Activated CD4-positive, alpha-beta memory T cell treated with anti-CD3 and anti-CD28 coated beads for 36 hours (primary cell): ENCODE measurements at regions of chr1 and their contacts with region 1.

Region 1: DNA sequence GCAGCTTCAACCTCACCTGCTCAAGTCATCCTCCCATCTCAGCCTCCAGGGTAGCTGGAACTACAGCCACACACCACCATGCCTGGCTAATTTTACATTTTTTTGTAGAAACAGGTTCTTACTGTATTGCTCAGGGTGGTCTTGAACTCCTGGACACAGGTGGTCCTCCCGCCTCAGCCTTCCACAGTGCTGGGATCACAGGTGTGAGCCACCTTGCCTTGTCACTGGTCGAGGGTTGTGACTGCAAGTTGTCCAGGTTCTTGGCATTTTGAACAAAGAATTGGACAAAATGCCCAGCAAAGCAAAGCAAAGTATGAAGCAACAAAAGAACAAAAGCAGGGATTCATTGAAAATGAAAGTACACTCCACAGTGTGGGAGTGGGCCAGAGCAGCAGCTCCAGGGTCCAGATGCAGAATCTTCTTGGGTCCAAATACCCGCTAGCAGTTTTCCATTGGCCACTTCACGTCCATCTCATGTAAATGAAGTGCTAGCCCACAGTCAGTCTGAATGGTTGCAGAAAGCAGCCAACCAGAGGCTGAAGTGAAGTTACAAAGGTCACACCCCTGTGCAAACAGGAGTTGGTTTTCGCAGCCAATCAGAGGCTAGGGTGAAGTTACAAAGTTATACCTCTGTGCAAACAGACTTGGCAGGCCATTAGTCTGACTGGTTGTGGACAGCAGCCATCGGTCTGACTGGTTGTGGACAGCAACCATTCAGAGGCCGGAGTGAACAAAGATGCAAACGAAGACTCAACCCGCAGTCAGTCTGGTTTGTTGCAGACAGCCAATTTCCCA is 109.5 kb upstream of the KIF26B start:
- DNase-seq: no peak
- H3K4me3 Mint-ChIP-seq: no peak overlapping the region
- H3K27ac Mint-ChIP-seq: no peak overlapping the region
- H3K4me1 Mint-ChIP-seq: no peaks in the 10 kb centered on the region
- H3K27me3 Mint-ChIP-seq: no peaks in the 10 kb centered on the region

Region 2: GRCh38 chr1:244652699-244653466 is 392.4 kb before region 1 on chr1 and contains the start of gene DESI2:
- CTCF ChIA-PET with region 1: interaction called, 3 read pairs
- POLR2A ChIA-PET with region 1: no interaction called
- intact Hi-C with region 1: loop called (anchors 5 kb)
- DNase-seq: peak; percentile 98
- H3K4me3 Mint-ChIP-seq: peak within 1 kb of the TSS; percentile 79
- H3K27ac Mint-ChIP-seq: peak within 1 kb of the TSS; percentile 79
- H3K4me1 Mint-ChIP-seq: peaks cover 22% of the 10 kb centered on the region
- H3K27me3 Mint-ChIP-seq: no peaks in the 10 kb centered on the region
- total RNA-seq, gene DESI2: 24.8 to 25.6 TPM

Region 3: DNA sequence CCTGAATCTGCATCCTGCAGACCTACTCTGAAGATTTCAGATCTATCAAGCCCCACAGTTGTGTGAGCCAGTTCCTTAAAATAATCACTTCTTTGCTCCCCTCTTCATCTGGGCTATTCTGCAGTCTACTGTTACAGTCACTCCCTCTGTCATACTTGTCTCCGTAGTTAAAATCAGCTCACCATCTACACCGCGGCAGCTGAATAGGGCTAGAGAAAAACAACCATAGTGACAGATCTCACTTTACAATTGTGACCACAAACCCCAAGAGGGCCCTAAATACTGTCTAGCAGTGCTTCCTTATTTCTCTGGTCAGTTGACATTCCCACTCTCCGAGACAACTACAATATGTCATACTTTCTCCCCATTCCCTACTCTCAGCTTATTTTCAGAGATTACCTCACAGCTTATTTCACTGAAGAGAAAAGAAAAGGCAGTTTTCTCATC is 379.5 kb before region 1 on chr1:
- CTCF ChIA-PET with region 1: no interaction called
- POLR2A ChIA-PET with region 1: no interaction called
- intact Hi-C with region 1: no loop called
- DNase-seq: no peak
- H3K4me3 Mint-ChIP-seq: no peak overlapping the region
- H3K27ac Mint-ChIP-seq: no peak overlapping the region
- H3K4me1 Mint-ChIP-seq: peaks cover 9% of the 10 kb centered on the region
- H3K27me3 Mint-ChIP-seq: no peaks in the 10 kb centered on the region

Region 4: GRCh38 chr1:244788493-244789275 is 256.6 kb before region 1 on chr1:
- CTCF ChIA-PET with region 1: no interaction called
- POLR2A ChIA-PET with region 1: no interaction called
- intact Hi-C with region 1: no loop called
- DNase-seq: no peak
- H3K4me3 Mint-ChIP-seq: no peak overlapping the region
- H3K27ac Mint-ChIP-seq: no peak overlapping the region
- H3K4me1 Mint-ChIP-seq: no peaks in the 10 kb centered on the region
- H3K27me3 Mint-ChIP-seq: peaks cover 2% of the 10 kb centered on the region

Region 5: GRCh38 chr1:244835276-244836134 is 209.8 kb before region 1 on chr1 and contains the start of gene COX20:
- CTCF ChIA-PET with region 1: interaction called, 12 read pairs
- POLR2A ChIA-PET with region 1: interaction called, 7 read pairs
- intact Hi-C with region 1: no loop called
- DNase-seq: peak; percentile 89
- H3K4me3 Mint-ChIP-seq: peak within 1 kb of the TSS; percentile 94
- H3K27ac Mint-ChIP-seq: peak within 1 kb of the TSS; percentile 99
- H3K4me1 Mint-ChIP-seq: peaks cover 45% of the 10 kb centered on the region
- H3K27me3 Mint-ChIP-seq: no peaks in the 10 kb centered on the region
- total RNA-seq, gene COX20: 23.4 to 27.8 TPM

Region 6: GRCh38 chr1:244854865-244855578 is 190.3 kb before region 1 on chr1:
- CTCF ChIA-PET with region 1: interaction called, 12 read pairs
- POLR2A ChIA-PET with region 1: no interaction called
- intact Hi-C with region 1: no loop called
- DNase-seq: no peak
- H3K4me3 Mint-ChIP-seq: peak overlapping the region; percentile 27
- H3K27ac Mint-ChIP-seq: peak overlapping the region; percentile 80
- H3K4me1 Mint-ChIP-seq: peaks cover 89% of the 10 kb centered on the region
- H3K27me3 Mint-ChIP-seq: no peaks in the 10 kb centered on the region

Region 7: DNA sequence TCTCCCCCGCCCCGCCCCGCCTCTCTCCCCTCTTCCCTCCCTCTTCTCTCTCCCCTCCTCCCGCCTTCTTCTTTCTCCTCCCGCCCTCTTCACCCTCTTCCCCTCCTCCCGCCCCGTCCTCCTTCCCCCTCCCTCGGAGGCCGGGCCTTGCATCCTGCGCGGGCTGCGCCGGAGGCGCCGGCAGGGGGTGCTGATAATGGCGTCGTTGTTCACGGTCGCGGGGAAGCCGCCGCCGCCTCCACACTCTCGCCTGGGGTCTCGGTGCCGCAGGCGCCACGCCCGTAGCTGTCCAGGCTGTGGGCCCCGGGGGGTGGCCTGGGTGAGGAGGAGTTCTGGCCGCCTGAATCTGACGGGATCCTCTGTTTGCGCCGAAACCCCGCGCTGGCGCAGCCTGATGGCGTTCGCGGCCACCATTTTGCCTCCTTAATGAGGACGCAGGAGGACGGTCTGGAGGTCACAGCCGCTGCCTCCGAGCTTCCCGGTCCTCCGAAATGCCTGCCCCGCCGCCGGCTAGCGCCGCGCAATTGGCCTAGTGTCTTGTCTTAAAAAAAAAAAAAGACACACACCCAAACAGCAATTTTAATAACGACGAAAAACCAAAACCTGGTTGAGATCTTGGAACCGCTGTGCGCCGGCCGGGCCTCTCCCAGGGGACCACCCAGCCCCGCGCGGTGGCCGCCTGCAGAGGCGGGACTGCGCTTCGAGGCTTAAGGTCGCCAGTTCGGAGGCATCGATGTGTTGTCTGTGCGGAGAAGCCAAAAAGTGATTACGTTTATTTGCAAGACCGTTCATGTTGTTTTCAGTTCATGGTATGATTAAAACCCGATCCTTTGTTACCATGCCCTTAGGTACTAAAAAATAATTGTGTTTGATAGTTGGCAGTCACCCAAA is 74.4 kb before region 1 on chr1:
- CTCF ChIA-PET with region 1: interaction called, 9 read pairs
- POLR2A ChIA-PET with region 1: no interaction called
- intact Hi-C with region 1: loop called (anchors 2 kb)
- DNase-seq: peak; percentile 93
- H3K4me3 Mint-ChIP-seq: peak overlapping the region; percentile 89
- H3K27ac Mint-ChIP-seq: peak overlapping the region; percentile 98
- H3K4me1 Mint-ChIP-seq: peaks cover 18% of the 10 kb centered on the region
- H3K27me3 Mint-ChIP-seq: no peaks in the 10 kb centered on the region

Region 8: DNA sequence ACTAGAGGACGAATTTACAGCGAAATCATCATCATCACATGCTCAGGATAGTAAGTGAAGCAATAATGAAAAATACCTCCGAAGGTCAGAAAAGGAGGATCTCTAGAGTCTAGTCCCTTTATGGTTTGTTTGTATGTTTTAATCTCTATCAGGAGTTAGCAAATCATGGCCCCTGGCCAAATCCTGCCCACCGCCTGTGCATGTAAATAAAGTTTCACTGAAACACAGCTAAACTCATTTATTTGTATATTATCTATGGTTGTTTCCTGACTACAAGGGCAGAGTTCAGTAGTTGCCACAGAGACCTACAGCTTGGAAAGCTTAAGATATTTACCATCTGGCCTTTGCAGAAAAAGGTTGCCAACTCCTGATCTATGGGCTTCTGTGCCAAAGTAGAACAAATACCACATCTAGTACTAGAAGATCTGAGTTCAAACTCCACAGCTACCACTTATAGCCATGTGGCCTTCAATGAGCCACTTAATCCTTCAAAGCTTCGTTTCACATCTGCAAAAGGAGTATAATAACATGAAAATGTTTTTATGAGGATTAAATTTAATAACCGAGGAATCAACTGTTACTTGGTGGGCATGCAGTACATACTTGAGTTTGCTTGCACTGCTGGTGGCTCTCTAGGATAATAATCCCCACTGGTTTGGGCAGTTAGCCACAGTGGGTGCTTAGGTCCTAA is 15.5 kb after region 1 on chr1:
- CTCF ChIA-PET with region 1: interaction called, 12 read pairs
- POLR2A ChIA-PET with region 1: no interaction called
- intact Hi-C with region 1: no loop called
- DNase-seq: no peak
- H3K4me3 Mint-ChIP-seq: no peak overlapping the region
- H3K27ac Mint-ChIP-seq: no peak overlapping the region
- H3K4me1 Mint-ChIP-seq: no peaks in the 10 kb centered on the region
- H3K27me3 Mint-ChIP-seq: no peaks in the 10 kb centered on the region

Region 9: GRCh38 chr1:245180496-245181157 is 135.3 kb after region 1 on chr1:
- CTCF ChIA-PET with region 1: no interaction called
- POLR2A ChIA-PET with region 1: no interaction called
- intact Hi-C with region 1: no loop called
- DNase-seq: no peak
- H3K4me3 Mint-ChIP-seq: no peak overlapping the region
- H3K27ac Mint-ChIP-seq: no peak overlapping the region
- H3K4me1 Mint-ChIP-seq: no peaks in the 10 kb centered on the region
- H3K27me3 Mint-ChIP-seq: no peaks in the 10 kb centered on the region